IMR-90 (cell line): ENCODE measurements at regions of chr7 and their contacts with region 1.

Region 1: DNA sequence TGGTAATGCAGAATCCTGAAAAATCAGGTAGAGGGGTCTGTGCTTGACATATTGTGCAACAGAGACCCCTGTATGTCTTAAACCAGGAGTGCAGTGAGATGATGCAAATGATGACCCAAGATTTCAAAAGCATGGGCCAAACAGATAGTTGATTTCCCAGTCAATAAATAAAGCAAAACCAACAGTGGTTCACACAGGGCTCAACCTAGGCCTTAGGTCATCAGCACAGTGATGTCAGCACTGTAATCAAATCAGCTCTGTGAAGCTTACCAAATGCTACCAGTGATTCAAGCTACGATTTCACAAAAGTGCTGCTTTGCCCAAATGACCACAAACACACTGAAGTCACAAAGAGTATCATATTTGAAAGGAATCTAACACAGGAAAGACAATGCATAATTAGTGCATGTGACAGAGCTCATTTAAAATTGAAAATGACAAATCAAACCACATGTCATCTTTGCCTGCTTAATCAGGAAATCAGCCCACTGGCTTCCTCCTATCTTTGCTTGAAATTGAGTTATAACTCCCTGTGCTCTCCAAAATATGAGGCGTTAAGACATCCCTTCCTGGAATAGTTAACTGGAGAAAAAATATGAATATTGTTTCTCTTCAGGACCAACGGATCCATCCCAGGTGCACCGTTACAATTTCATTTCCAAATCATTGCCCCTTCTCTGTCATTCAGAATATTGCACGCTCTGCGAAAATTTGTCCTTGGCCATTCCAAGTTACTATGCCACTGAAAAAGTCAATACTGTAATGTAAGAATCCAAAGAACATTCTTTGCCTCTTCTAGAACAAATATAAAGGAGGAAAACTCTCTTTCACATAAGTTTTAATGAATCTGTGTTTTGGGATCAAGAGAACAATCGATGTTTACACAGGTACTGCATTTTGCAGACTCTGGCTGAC is 41.9 kb upstream of the ASL start:
- DNase-seq: peak; percentile 22
- ATAC-seq: peak; percentile 53
- H3K4me3 ChIP-seq: no peak overlapping the region
- H3K27ac ChIP-seq: no peak overlapping the region
- H3K4me1 ChIP-seq: no peaks in the 10 kb centered on the region; the same call in 1 of the 2 replicates
- H3K27me3 ChIP-seq: no peaks in the 10 kb centered on the region
- CTCF ChIP-seq: no peak
- POLR2A ChIP-seq: no peak
- RAD21 ChIP-seq: no peak

Region 2: DNA sequence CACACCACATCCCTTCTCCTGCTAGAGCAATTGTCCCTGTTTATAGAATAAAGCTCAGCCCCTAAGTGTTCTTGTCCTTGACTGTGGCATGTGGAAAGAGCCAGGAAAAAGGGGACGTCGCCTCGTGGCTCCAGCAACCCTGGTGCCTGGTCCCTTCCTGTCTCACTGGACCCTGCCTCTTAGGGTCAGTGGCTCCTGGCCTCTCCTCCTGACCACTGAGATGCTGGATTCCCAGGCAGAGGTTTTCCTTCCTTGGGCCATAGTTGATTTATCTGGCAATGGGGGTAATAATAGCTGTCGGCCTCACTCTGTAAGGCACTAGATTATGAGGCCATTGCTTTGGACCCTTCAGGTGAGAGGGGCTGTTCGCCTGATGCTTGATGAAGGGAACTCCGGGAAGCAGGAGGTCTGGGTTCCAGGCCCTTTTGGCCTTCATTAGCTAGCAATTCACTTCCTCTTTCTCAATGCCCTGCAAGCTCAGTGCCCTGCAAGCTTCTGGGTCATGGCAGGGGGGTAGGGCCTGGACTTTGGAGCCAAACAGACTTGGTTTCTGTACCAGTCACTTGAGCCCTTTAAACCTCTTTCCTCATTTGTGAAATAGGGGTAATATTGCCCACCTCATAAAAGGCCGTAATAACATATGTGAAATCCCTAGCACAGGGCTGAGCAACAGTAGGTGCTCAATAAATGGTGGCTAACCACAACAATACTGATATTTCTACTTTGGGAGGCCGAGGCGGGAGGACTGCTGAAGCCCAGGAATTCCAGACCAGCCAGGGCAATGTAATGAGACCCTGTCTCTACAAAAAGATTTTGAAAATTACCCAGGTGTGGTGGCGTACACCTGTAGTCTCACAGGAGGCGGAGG is 43.0 kb after region 1 on chr7:
- CTCF ChIA-PET with region 1: interaction called, 5 read pairs
- POLR2A ChIA-PET with region 1: no interaction called
- dilution Hi-C with region 1: no loop called
- in situ Hi-C with region 1: no loop called
- intact Hi-C with region 1: loop called (anchors 1 kb)
- DNase-seq: no peak
- ATAC-seq: no peak
- H3K4me3 ChIP-seq: peak overlapping the region; percentile 95
- H3K27ac ChIP-seq: peak overlapping the region; percentile 69
- H3K4me1 ChIP-seq: peaks cover 7% of the 10 kb centered on the region
- H3K27me3 ChIP-seq: no peaks in the 10 kb centered on the region
- CTCF ChIP-seq: no peak
- POLR2A ChIP-seq: no peak
- RAD21 ChIP-seq: no peak

Region 3: DNA sequence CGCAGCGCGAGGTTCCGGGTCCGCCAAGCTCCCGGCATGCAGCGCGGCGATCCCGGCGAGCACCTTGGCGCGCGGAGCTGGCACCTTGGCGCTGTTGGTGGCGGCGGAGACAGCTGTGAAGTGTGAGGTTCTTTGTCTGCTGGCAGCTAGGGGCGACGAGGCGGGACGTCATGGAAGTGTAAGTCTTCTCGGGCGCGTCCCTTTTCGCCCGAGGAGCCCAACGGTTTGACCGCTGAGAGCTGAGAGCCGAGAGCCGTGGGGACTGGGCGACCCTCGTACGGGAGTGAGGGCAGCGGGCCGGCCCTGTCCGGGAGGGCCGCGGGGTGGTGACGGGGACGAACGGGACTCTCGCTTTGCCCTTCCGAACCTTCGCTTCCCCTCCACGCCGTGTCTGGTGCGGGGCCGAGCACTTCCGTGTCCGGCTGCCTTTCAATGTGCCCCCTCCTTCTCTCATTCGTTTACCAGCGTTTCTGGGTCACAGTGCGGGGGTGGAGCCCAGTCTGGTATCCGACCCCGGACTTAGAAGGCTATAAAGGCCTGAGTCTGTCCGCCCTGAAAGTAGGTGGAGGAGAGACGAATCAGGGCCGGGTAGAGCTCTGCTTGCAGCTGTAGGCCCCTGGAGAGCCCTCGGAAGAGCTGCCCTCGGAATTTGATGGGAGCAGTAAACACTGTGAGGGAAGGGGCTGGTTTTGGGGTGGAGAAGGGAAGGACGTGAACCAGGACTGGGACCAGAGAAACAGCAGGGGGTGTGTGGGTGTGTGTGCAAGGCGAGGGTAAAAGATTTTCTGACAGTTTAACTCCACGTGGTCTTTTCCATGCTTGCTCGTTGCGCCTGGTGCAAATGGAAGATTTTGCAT is 81.3 kb after region 1 on chr7 and contains the start of gene CRCP:
- CTCF ChIA-PET with region 1: no interaction called
- POLR2A ChIA-PET with region 1: interaction called, 12 read pairs
- dilution Hi-C with region 1: no loop called
- in situ Hi-C with region 1: no loop called
- intact Hi-C with region 1: loop called (anchors 5 kb)
- DNase-seq: peak; percentile 70
- ATAC-seq: peak; percentile 82
- H3K4me3 ChIP-seq: peak within 1 kb of the TSS; percentile 85
- H3K27ac ChIP-seq: peak within 1 kb of the TSS; percentile 97
- H3K4me1 ChIP-seq: peaks cover 3% of the 10 kb centered on the region
- H3K27me3 ChIP-seq: no peaks in the 10 kb centered on the region
- CTCF ChIP-seq: peak; percentile 44
- POLR2A ChIP-seq: peak; percentile 79
- RAD21 ChIP-seq: peak; percentile 46
- total RNA-seq, gene CRCP: 37.5 and 37.8 TPM in 2 replicates